Naive thymus-derived CD4-positive, alpha-beta T cell (primary cell): ENCODE measurements at regions of chr4 and their contacts with region 1.

Region 1: GRCh38 chr4:40149960-40150385 is 46.9 kb upstream of the RHOH start:
- DNase-seq: peak; percentile 28 to 85 (median 77)
- ATAC-seq: peak; percentile 98
- H3K4me3 ChIP-seq: no peak overlapping the region
- H3K4me3 Mint-ChIP-seq: peak overlapping the region in 6 of 10 donors; percentile 11 to 64 (median 44)
- H3K27ac ChIP-seq: peak overlapping the region; percentile 0
- H3K27ac Mint-ChIP-seq: peak overlapping the region; percentile 62 to 94 (median 89)
- H3K4me1 ChIP-seq: peaks cover 4 to 42% of the 10 kb centered on the region in 2 donors
- H3K4me1 Mint-ChIP-seq: peaks cover 2 to 52% (median 44%) of the 10 kb centered on the region in 7 donors
- H3K27me3 ChIP-seq: no peaks in the 10 kb centered on the region
- H3K27me3 Mint-ChIP-seq: no peaks in the 10 kb centered on the region

Region 2: DNA sequence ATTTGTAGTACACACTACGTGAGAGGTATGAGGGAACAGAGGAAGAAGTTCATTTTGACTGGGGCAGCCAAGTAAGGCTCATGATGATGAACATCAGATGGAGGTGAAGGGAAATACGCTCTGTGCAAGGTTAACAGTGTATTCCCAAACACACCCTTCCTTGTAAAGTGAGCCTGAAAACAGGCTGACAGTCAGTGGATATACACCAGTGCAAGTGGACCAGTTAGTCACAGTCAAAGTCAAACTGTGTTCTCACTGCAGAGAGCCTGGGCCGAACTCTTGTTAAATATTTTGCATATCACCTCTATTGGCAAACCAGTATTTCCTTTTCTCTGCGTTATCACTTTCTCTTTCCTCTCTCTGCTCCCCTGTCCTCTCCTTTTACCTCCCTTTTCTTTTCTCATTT is 23.5 kb after region 1 on chr4:
- CTCF ChIA-PET with region 1: no interaction called
- POLR2A ChIA-PET with region 1: interaction called, 5 read pairs
- intact Hi-C with region 1: loop called in 1 of 2 experiments (anchors 2 kb)
- DNase-seq: no peak
- ATAC-seq: peak; percentile 63
- H3K4me3 ChIP-seq: no peak overlapping the region
- H3K4me3 Mint-ChIP-seq: peak overlapping the region; percentile 50 to 79 (median 73)
- H3K27ac ChIP-seq: peak overlapping the region; percentile 38
- H3K27ac Mint-ChIP-seq: peak overlapping the region; percentile 71 to 94 (median 83)
- H3K4me1 ChIP-seq: peaks cover 0 to 8% of the 10 kb centered on the region in 2 donors
- H3K4me1 Mint-ChIP-seq: peaks cover 14 to 33% (median 29%) of the 10 kb centered on the region in 7 donors
- H3K27me3 ChIP-seq: no peaks in the 10 kb centered on the region
- H3K27me3 Mint-ChIP-seq: no peaks in the 10 kb centered on the region

Region 3: GRCh38 chr4:40205259-40206198 is 55.6 kb after region 1 on chr4:
- CTCF ChIA-PET with region 1: interaction called, 6 read pairs
- POLR2A ChIA-PET with region 1: interaction called, 15 read pairs
- intact Hi-C with region 1: no loop called
- DNase-seq: peak in 1 of 9 donors; percentile 44
- ATAC-seq: peak; percentile 66
- H3K4me3 ChIP-seq: peak overlapping the region; percentile 63
- H3K4me3 Mint-ChIP-seq: peak overlapping the region; percentile 91 to 100 (median 98)
- H3K27ac ChIP-seq: peak overlapping the region; percentile 100
- H3K27ac Mint-ChIP-seq: peak overlapping the region; percentile 94 to 100 (median 98)
- H3K4me1 ChIP-seq: peaks cover 24 to 40% of the 10 kb centered on the region in 2 donors
- H3K4me1 Mint-ChIP-seq: peaks cover 55 to 78% (median 67%) of the 10 kb centered on the region in 7 donors
- H3K27me3 ChIP-seq: no peaks in the 10 kb centered on the region
- H3K27me3 Mint-ChIP-seq: no peaks in the 10 kb centered on the region

Region 4: GRCh38 chr4:40238700-40239548 is 89.0 kb after region 1 on chr4:
- CTCF ChIA-PET with region 1: interaction called, 4 read pairs
- POLR2A ChIA-PET with region 1: no interaction called
- intact Hi-C with region 1: loop called in 1 of 2 experiments (anchors 5 kb)
- DNase-seq: peak in 8 of 9 donors; percentile 54 to 90 (median 75)
- ATAC-seq: peak; percentile 94
- H3K4me3 ChIP-seq: peak overlapping the region; percentile 49
- H3K4me3 Mint-ChIP-seq: peak overlapping the region; percentile 64 to 87 (median 79)
- H3K27ac ChIP-seq: peak overlapping the region; percentile 79
- H3K27ac Mint-ChIP-seq: peak overlapping the region; percentile 89 to 98 (median 94)
- H3K4me1 ChIP-seq: peaks cover 81 to 90% of the 10 kb centered on the region in 2 donors
- H3K4me1 Mint-ChIP-seq: peaks cover 54 to 97% (median 94%) of the 10 kb centered on the region in 7 donors
- H3K27me3 ChIP-seq: no peaks in the 10 kb centered on the region
- H3K27me3 Mint-ChIP-seq: no peaks in the 10 kb centered on the region

Region 5: DNA sequence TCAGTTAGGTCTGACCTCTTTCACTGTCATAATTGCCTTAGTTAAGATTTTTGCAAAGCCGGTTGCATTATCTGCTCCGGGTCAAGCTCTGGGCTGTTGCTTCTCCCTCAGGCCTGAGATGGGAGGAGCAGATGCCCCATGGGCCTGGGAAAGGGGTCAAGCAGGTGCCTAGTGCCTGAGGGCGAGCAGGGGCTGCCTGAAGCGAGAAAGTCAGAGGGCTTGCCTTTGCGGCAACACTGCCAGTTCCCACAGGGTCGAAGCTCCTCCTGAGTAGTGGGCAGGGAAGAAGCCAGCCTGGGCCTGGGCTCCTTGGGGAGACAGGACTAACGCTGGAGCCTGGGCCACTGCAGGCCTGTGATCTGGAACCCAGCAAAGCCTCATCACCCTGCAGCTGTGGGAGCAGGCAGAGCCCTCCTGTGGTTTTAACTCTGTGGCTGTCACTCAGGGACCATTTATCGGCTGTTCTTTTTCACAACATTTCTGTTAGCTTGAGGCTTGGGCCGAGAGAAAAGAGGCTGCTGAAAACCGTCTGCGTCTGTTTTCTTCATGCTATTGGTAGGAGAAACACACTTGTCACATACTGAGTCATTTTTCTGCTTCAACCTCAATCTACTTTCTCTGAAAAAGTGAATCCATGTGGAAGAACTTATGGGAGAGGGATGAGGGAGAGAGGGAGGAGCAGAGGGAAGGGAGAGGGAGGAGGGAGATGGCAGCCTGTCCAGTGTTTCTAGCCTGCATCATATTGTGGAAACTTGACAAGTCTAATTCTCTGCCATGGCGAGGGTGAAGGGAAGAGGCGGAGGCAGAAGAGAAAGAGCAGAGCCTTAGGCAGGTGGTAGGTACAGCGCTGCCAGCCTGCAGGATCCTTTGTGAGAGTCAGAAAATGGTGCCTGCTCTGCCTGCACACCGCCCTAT is 115.3 kb after region 1 on chr4:
- CTCF ChIA-PET with region 1: no interaction called
- POLR2A ChIA-PET with region 1: interaction called, 3 read pairs
- intact Hi-C with region 1: loop called in 1 of 2 experiments (anchors 1 kb)
- DNase-seq: peak in 5 of 9 donors; percentile 43 to 58 (median 51)
- ATAC-seq: peak; percentile 87
- H3K4me3 ChIP-seq: peak overlapping the region; percentile 22
- H3K4me3 Mint-ChIP-seq: peak overlapping the region; percentile 72 to 89 (median 81)
- H3K27ac ChIP-seq: peak overlapping the region; percentile 77
- H3K27ac Mint-ChIP-seq: peak overlapping the region; percentile 80 to 99 (median 97)
- H3K4me1 ChIP-seq: peaks cover 31 to 53% of the 10 kb centered on the region in 2 donors
- H3K4me1 Mint-ChIP-seq: peaks cover 33 to 88% (median 78%) of the 10 kb centered on the region in 7 donors
- H3K27me3 ChIP-seq: no peaks in the 10 kb centered on the region
- H3K27me3 Mint-ChIP-seq: no peaks in the 10 kb centered on the region

Region 6: GRCh38 chr4:40316782-40317635 is 167.0 kb after region 1 on chr4:
- CTCF ChIA-PET with region 1: interaction called, 63 read pairs
- POLR2A ChIA-PET with region 1: interaction called, 21 read pairs
- intact Hi-C with region 1: loop called (anchors 2 kb)
- DNase-seq: peak; percentile 39 to 83 (median 76)
- ATAC-seq: peak; percentile 81
- H3K4me3 ChIP-seq: peak overlapping the region; percentile 75
- H3K4me3 Mint-ChIP-seq: peak overlapping the region; percentile 79 to 93 (median 86)
- H3K27ac ChIP-seq: peak overlapping the region; percentile 92
- H3K27ac Mint-ChIP-seq: peak overlapping the region; percentile 90 to 99 (median 99)
- H3K4me1 ChIP-seq: peaks cover 7 to 19% of the 10 kb centered on the region in 2 donors
- H3K4me1 Mint-ChIP-seq: peaks cover 23 to 71% (median 61%) of the 10 kb centered on the region in 7 donors
- H3K27me3 ChIP-seq: no peaks in the 10 kb centered on the region
- H3K27me3 Mint-ChIP-seq: no peaks in the 10 kb centered on the region

Region 7: GRCh38 chr4:40550948-40551462 is 401.0 kb after region 1 on chr4:
- CTCF ChIA-PET with region 1: no interaction called
- POLR2A ChIA-PET with region 1: no interaction called
- intact Hi-C with region 1: loop called (anchors 1 kb)
- DNase-seq: peak in 8 of 9 donors; percentile 25 to 77 (median 62)
- ATAC-seq: peak; percentile 68
- H3K4me3 ChIP-seq: peak overlapping the region; percentile 47
- H3K4me3 Mint-ChIP-seq: peak overlapping the region; percentile 74 to 95 (median 85)
- H3K27ac ChIP-seq: peak overlapping the region; percentile 61
- H3K27ac Mint-ChIP-seq: peak overlapping the region; percentile 83 to 99 (median 92)
- H3K4me1 ChIP-seq: peaks cover 0 to 11% of the 10 kb centered on the region in 2 donors
- H3K4me1 Mint-ChIP-seq: peaks cover 9 to 44% (median 19%) of the 10 kb centered on the region in 7 donors
- H3K27me3 ChIP-seq: no peaks in the 10 kb centered on the region
- H3K27me3 Mint-ChIP-seq: no peaks in the 10 kb centered on the region